Calu3 (cell line): ENCODE measurements at regions of chr7 and their contacts with region 1.

Region 1: DNA sequence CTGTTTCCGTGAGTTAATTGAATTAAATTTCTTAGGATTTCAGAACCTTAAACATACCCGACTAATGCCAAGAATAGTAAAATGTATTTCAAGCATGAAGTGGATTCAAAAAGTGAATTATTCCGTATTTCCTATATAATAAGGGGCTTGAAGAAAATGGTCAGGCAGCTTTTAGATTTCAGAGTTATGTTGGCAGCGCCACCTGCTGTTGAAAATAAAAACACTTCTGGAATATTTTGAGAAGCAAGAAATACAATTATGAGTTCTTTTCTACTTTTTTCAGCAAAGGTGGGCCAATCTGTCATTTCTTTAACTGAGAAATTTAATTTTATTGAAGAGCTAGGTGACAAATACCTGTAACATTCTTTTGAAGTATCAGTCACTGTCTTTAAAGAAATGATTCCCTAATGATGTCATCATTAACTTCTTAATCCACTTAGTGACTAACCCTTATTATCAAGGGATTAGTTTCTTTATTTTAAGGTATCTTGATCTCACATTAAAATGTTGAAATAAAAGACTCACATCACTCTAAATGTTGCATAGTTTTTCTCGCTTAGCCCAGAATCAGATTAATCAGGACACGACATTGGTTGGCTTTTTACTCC is 36.6 kb upstream of the AGR3 start:
- DNase-seq: peak; percentile 60
- H3K4me3 Mint-ChIP-seq: no peak overlapping the region
- H3K27ac Mint-ChIP-seq: peak overlapping the region; percentile 30
- H3K4me1 Mint-ChIP-seq: peaks cover 93% of the 10 kb centered on the region
- H3K27me3 Mint-ChIP-seq: no peaks in the 10 kb centered on the region
- CTCF ChIP-seq: peak; percentile 78

Region 2: GRCh38 chr7:16695621-16696237 is 222.7 kb before region 1 on chr7:
- CTCF ChIA-PET with region 1: interaction called, 10 read pairs
- intact Hi-C with region 1: loop called (anchors 1 kb)
- DNase-seq: peak; percentile 71
- H3K4me3 Mint-ChIP-seq: no peak overlapping the region
- H3K27ac Mint-ChIP-seq: no peak overlapping the region
- H3K4me1 Mint-ChIP-seq: peaks cover 7% of the 10 kb centered on the region
- H3K27me3 Mint-ChIP-seq: no peaks in the 10 kb centered on the region
- CTCF ChIP-seq: peak; percentile 83

Region 3: DNA sequence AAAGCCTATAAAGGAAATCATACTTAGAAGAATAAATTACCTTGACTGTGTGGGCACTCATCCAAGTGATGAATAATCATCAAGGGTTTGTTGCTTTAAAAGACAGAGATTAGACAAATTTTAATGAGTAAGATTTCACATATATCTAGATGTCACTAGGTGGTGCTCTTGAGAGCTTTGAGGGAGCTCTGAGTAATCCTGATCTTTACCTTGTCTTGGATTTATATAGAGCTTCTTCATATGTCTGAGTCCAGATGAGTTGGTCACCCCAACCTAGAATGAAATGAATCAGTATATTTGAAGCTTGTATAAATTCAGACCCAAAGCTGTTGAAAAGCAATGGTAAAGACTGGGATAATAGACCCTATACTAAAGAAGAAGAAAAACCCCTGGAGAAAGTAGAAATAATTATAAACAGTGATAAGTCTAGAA is 117.3 kb before region 1 on chr7:
- CTCF ChIA-PET with region 1: interaction called, 27 read pairs
- intact Hi-C with region 1: loop called (anchors 1 kb)
- DNase-seq: no peak
- H3K4me3 Mint-ChIP-seq: peak overlapping the region; percentile 80
- H3K27ac Mint-ChIP-seq: peak overlapping the region; percentile 63
- H3K4me1 Mint-ChIP-seq: peaks cover 18% of the 10 kb centered on the region
- H3K27me3 Mint-ChIP-seq: no peaks in the 10 kb centered on the region
- CTCF ChIP-seq: peak; percentile 49

Region 4: DNA sequence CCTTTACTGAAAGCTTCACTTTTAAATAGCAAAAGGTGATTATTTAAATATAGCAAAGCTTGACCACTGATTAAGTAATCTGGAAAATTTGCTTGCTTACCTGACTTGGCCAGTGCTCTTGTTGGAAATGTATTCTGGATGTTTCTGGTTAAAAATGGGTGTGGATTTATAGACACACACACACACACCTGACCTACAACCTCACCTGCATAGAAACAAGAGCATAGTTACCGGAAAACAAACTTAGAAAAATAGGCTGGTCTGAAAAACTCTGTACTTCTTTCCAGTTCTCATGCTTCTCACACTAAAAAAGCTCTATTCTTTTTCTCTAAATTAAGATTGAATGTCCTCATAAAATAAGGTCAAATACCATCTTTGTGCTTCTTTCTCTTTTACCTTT is 36.5 kb before region 1 on chr7 and contains the start of gene AGR3:
- CTCF ChIA-PET with region 1: interaction called, 3 read pairs
- intact Hi-C with region 1: loop called (anchors 5 kb)
- DNase-seq: peak; percentile 51
- H3K4me3 Mint-ChIP-seq: no peak within 1 kb of the TSS
- H3K27ac Mint-ChIP-seq: peak within 1 kb of the TSS; percentile 60
- H3K4me1 Mint-ChIP-seq: peaks cover 14% of the 10 kb centered on the region
- H3K27me3 Mint-ChIP-seq: no peaks in the 10 kb centered on the region
- CTCF ChIP-seq: no peak
- total RNA-seq, gene AGR3: 8.4 and 11.0 TPM in 2 replicates

Region 5: GRCh38 chr7:16891338-16891737 is 27.1 kb before region 1 on chr7:
- CTCF ChIA-PET with region 1: interaction called, 31 read pairs
- intact Hi-C with region 1: loop called (anchors 1 kb)
- DNase-seq: peak; percentile 76
- H3K4me3 Mint-ChIP-seq: no peak overlapping the region
- H3K27ac Mint-ChIP-seq: no peak overlapping the region
- H3K4me1 Mint-ChIP-seq: peaks cover 48% of the 10 kb centered on the region
- H3K27me3 Mint-ChIP-seq: no peaks in the 10 kb centered on the region
- CTCF ChIP-seq: peak; percentile 68

Region 6: GRCh38 chr7:16905300-16906044 is 12.9 kb before region 1 on chr7:
- CTCF ChIA-PET with region 1: interaction called, 6 read pairs
- intact Hi-C with region 1: loop called (anchors 1 kb)
- DNase-seq: no peak
- H3K4me3 Mint-ChIP-seq: peak overlapping the region; percentile 47
- H3K27ac Mint-ChIP-seq: peak overlapping the region; percentile 73
- H3K4me1 Mint-ChIP-seq: peaks cover 23% of the 10 kb centered on the region
- H3K27me3 Mint-ChIP-seq: no peaks in the 10 kb centered on the region
- CTCF ChIP-seq: no peak

Region 7: DNA sequence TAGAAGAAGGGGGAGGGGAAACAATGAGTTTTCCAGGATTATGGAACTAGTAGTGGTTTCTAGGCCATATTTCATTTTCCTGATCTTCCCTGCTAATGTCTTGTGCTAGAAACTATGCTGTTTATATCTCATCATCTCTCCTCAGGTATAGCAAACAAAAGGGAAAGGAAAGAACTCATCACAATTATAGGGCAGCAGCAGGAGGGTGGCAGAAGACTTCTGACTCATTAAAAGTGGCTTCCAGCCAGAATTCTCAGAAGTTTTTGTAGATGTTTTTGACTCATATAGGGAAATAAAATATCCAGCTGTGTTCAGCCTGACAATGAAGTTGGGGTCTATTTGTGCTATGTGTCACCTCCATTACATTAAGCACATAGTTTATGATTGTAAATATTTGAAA is 386.5 kb after region 1 on chr7:
- CTCF ChIA-PET with region 1: interaction called, 3 read pairs
- intact Hi-C with region 1: loop called (anchors 5 kb)
- DNase-seq: peak; percentile 71
- H3K4me3 Mint-ChIP-seq: no peak overlapping the region
- H3K27ac Mint-ChIP-seq: no peak overlapping the region
- H3K4me1 Mint-ChIP-seq: no peaks in the 10 kb centered on the region
- H3K27me3 Mint-ChIP-seq: no peaks in the 10 kb centered on the region
- CTCF ChIP-seq: no peak